Endothelial cell of umbilical vein (primary cell): ENCODE measurements at regions of chr15 and their contacts with region 1.

Region 1: DNA sequence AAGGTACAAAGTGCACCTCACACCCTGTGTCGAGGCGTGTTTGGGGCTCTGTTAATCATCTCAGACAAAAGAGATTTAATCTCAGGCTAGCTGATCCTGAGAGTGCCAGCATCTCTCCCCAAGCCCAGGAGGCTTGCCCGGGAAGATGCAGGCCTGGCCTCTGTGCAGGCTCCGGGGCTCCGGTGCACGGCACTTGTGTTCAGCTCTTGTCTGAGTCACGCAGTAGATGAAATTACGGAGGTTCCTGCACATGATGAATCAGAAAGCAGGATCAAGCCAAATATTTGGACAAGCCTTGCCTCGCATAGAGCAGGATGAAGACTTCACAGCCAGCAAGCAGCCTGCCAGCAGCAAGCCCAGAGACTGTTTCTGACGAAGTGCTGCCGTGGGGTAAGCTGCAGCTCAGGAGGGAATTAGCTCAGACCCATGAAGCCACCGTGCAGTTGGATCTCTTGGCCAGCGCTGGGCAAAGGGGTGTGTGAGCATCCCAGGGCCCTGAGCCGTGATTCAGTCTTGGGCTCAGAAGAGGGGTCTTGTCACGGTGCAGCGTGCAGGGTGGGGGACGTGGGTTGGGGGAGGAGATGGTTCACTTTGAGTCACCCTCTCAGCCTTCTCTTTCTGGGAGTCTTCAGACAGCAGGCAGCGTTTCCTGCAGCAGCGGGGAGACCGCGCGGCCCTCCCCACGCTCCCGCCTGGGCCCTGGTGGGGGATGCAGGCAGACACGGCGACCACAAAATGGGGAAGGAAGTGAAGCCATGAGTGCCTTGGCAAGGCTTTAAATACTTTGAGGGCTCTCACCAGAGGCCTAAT is 89.2 kb upstream of the MEF2A start:
- DNase-seq: peak; percentile 84
- H3K4me3 ChIP-seq: no peak overlapping the region
- H3K27ac ChIP-seq: peak overlapping the region; percentile 36
- H3K4me1 ChIP-seq: peaks cover 17% of the 10 kb centered on the region
- H3K27me3 ChIP-seq: no peaks in the 10 kb centered on the region
- CTCF ChIP-seq: no peak
- POLR2A ChIP-seq: no peak

Region 2: GRCh38 chr15:99486371-99487336 is 10.0 kb after region 1 on chr15:
- CTCF ChIA-PET with region 1: interaction called, 6 read pairs
- POLR2A ChIA-PET with region 1: no interaction called
- dilution Hi-C with region 1: no loop called
- intact Hi-C with region 1: loop called (anchors 1 kb)
- DNase-seq: peak; percentile 61
- H3K4me3 ChIP-seq: peak overlapping the region; percentile 26 to 53 (median 32)
- H3K27ac ChIP-seq: no peak overlapping the region
- H3K4me1 ChIP-seq: peaks cover 18% of the 10 kb centered on the region
- H3K27me3 ChIP-seq: no peaks in the 10 kb centered on the region
- CTCF ChIP-seq: no peak
- POLR2A ChIP-seq: no peak